Left colon (tissue), 2 donors: ENCODE measurements at regions of chr17 and their contacts with region 1.

Region 1: DNA sequence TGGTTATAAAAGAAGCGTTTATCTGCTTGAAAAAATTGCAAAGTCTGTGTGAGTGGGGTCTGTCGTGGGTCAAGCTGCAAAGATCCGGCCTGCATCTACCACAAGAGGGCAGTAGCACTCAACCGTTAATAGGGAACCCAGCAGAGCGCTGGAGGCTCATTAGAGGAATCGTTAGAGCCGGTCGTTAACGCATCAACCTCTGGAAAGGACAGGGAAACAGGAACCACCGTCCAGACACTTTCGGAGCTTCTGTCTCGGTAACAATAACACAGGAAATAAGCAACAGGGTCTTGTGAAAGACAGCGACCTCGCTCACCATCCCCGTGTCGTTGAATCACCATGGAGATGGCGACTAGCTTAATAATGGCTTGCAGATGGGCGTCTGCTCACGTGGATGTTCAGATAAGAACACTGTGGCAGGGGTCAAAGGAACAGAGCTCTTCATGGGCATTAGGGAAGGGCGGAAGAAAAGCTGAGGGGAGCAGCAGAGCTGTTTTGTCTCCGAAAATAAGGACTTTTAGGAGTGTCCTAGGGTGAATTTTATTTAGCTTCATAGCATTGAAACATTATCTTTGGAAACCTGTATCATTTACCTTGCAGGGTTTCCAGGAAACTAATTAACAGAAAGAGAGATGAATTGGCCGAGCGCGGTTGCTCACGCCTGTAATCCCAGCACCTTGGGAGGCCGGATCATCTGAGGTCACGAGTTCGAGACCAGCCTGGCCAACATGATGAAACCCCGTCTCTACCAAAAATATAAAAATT is 11.9 kb upstream of the NSRP1 start:
- DNase-seq: peak; percentile 76 to 81
- ATAC-seq: peak; percentile 95

Region 2: DNA sequence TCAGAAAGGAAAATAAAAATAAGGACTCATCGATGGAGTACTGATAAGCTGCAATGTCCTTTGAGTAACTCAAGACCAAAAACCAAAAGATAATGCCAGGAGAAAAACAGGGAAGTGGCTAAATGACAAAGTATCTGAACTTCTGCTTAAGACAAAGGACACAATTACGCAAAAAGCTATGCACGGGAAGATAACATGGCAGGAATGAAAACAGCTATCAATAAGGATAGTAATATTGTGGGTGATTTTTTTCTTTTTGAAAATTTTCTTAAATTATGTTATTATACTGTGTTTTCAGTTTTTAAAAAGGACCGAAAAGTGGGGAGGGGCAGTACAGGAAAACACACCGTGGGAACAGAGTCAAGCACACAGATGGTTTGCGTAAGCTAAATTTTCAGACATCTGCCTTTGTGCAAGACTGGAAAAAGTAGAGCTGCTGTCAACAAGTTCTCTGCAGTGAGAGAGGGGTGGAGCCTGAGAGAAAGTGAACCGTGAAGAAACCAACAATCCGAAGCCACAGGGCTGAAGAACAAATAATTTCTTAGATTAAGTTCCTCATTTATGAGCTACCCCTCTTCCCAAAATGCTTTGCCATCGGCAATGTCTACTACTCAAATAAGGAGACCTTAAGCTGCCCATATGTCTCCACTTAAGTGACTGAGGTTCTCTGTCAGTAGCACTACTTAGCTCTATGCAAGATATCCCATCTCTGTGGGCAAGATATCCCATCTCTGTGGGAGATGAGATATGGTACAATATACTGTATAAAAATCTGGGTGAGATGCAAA is 382.2 kb before region 1 on chr17:
- intact Hi-C with region 1: no loop called
- DNase-seq: peak; percentile 22 to 61
- ATAC-seq: peak; percentile 40

Region 3: DNA sequence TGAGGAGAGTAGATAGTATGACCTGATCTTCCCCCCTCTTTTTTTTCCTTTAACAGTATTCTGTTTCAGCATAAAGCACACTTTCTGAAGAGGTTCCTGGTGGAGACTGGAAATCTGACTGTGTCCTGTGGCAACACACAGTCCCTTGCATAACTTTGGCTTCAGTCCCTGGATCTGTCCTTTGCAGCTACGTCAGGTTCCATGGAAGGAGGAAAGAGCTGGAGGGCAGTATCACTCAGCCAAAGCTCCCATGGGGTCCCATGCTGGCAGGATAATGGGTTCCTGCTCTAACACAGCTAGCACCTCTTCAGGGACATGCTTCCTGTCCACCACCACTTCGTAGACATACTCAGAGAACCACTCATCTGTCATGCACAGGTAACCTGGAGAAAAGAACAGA is 144.0 kb after region 1 on chr17:
- intact Hi-C with region 1: no loop called
- DNase-seq: no peak
- ATAC-seq: no peak

Region 4: GRCh38 chr17:30336369-30337171 is 231.8 kb after region 1 on chr17:
- intact Hi-C with region 1: loop called in 1 of 2 experiments (anchors 10 kb)
- DNase-seq: peak; percentile 39 to 60
- ATAC-seq: peak; percentile 70